ENCODE measurements at regions of chr4 and their contacts with region 1.

Region 1: DNA sequence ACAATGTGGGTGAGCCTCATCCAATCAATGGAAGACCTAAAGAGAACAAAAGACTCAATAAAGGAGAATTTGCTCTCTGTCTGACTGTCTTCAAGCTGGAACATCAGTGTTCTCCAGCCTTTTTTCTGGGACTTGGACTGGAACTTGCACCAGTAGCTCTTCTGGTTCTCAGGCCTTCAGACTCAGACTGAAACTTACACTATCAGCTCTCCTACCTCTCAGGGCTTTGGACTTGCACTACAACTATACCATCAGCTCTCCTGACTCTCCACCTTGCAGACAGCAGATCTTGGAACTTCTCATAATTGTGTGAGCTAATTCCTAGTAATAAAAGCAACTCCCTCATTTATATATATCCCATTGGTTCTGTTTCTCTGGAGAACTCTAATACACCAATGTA is 185.9 kb downstream of the SMIM20 start:
- DNase-seq: no peak
- H3K4me3 Mint-ChIP-seq: no peak overlapping the region
- H3K27ac Mint-ChIP-seq: no peak overlapping the region
- H3K4me1 Mint-ChIP-seq: peaks cover 28% of the 10 kb centered on the region
- H3K27me3 Mint-ChIP-seq: no peaks in the 10 kb centered on the region

Region 2: GRCh38 chr4:26069218-26069617 is 30.7 kb before region 1 on chr4:
- intact Hi-C with region 1: no loop called
- DNase-seq: no peak
- H3K4me3 Mint-ChIP-seq: no peak overlapping the region
- H3K27ac Mint-ChIP-seq: peak overlapping the region; percentile 65
- H3K4me1 Mint-ChIP-seq: peaks cover 34% of the 10 kb centered on the region
- H3K27me3 Mint-ChIP-seq: no peaks in the 10 kb centered on the region

Region 3: GRCh38 chr4:26116092-26116491 is 16.1 kb after region 1 on chr4:
- intact Hi-C with region 1: loop called (anchors 2 kb)
- DNase-seq: no peak
- H3K4me3 Mint-ChIP-seq: no peak overlapping the region
- H3K27ac Mint-ChIP-seq: no peak overlapping the region
- H3K4me1 Mint-ChIP-seq: no peaks in the 10 kb centered on the region
- H3K27me3 Mint-ChIP-seq: no peaks in the 10 kb centered on the region

Measured in activated CD4-positive, alpha-beta T cell treated with anti-CD3 and anti-CD28 coated beads, Interleukin-2, amount 10 ng/mL, durations not matched to agents 24 days and 14 days (primary cell).